GM10248 (cell line): ENCODE measurements at regions of chr2 and their contacts with region 1.

Region 1: DNA sequence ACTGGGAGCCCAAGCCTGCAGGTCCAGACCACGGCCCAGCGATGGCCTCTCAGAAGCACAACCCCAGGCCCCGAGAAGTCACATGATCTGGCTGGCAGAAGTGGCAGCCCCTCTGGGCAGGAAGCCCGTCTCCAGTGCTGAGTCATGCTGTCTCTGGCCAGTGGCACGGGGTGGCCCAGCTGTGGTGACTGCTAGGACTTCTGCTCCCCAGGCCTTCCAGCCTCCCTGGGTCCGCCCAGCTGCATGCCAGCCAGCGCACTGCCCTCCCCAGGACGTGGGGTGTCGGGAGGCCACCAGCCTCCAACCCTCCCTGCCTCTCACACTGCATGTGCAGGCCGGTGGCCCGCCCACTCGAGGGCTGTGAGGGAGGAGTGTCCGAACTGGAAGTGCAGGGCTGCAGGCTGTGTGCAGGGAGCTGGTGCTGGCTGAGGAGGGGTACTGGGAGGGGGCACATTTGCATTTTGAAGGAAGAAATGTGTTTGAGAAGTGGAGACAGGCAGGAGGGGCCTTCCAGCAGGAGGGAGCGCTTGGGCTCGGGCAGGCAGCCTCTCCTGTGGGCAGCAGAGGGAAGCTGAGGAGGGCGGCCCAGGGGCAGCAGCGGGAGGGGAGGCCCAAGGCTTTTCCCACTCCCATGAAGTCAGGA is 17.0 kb upstream of the HPCAL1 start:
- DNase-seq: no peak
- CTCF ChIP-seq: no peak

Region 2: DNA sequence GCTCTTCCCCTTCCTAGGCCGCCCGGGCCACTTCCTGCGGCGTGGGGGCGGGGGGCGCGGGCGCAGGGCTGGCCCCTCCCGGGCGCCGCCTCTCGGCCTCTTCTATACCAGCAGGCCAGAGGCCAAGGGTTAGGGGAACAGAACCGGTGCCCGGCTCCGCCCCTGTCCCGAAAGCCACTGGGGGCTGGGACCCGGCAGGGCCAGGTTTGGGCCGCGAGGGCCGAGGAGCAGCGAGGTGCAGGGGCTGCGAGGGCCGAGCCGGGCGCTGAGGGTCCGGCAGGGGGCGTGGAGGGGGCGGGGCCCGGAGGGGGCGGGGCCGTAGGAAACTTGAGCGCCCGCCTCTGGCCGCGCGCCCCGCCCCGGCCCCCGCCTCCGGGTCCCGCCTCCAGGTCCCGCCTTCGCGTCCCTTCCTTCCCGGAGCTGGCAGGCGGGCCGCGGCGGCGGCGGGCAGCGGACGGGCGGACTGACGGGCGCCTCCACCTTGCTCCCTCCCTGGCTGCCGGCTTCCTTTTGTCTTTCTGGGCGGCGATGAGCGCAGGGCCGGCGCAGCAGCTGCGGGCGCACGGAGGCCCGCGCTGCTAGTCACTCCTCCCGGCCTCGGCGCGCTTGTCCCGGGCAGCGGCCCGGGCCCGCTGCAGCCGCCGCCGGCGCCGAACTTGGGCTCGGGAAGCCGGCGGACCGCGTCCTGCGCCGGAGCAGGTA is 17.0 kb after region 1 on chr2 and contains the start of gene HPCAL1:
- CTCF ChIA-PET with region 1: interaction called, 10 read pairs
- POLR2A ChIA-PET with region 1: no interaction called
- DNase-seq: peak; percentile 95
- CTCF ChIP-seq: peak; percentile 28

Region 3: GRCh38 chr2:10434886-10435819 is 149.5 kb after region 1 on chr2:
- CTCF ChIA-PET with region 1: no interaction called
- POLR2A ChIA-PET with region 1: no interaction called
- DNase-seq: peak; percentile 89
- CTCF ChIP-seq: peak; percentile 96

Region 4: DNA sequence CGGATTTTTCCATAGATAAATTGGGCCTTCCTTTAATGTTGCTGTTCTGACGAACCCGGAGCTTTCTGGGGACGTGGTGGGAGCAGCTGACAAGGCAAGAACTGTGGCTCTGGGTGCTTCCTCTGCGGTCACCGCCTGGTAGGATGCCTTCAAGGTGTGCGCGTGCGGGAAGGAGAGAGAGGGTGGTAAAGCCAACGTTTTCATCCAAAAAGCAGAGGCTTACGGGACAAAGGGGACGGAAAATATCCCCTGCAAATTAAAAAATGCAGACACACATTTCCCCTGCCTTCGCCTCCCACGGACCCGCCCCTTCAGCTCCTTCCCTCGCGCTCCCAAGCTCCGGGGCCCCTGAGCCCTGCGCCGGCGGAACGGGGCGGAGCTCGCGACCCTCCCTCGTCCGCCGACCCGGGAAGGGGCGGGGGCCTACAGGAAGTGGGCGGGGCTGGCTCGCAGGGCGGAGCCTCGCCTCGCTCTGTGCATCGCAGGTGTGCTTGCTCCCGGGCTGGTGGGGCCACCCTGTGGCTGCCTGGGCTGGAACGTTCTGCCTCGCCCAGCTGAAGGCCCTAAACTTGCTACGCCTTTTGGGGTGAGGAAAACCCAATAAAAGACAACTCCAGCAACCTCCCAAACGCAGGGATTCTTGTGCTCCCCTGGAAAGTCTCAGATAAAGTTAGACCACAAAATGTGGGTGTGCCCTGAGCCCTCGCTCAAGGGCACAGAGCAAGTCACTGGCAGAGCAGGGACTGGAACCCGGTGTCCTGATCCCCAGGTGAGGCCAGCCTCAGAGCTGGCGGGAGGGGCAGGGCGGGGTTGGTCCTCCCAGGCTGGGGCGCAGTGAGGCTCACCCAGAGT is 844.1 kb after region 1 on chr2:
- CTCF ChIA-PET with region 1: no interaction called
- POLR2A ChIA-PET with region 1: no interaction called
- DNase-seq: peak; percentile 76
- CTCF ChIP-seq: peak; percentile 45